Upper lobe of right lung (tissue), 1 donor: ENCODE measurements at regions of chr11 and their contacts with region 1.

Region 1: GRCh38 chr11:124746621-124747243 is 5.3 kb downstream of the VSIG2 start:
- DNase-seq: peak; percentile 94
- ATAC-seq: peak; percentile 90
- H3K4me3 ChIP-seq: peak overlapping the region; percentile 54
- H3K27ac ChIP-seq: peak overlapping the region; percentile 85
- H3K4me1 ChIP-seq: peaks cover 38% of the 10 kb centered on the region
- H3K27me3 ChIP-seq: no peaks in the 10 kb centered on the region
- CTCF ChIP-seq: peak; percentile 51

Region 2: DNA sequence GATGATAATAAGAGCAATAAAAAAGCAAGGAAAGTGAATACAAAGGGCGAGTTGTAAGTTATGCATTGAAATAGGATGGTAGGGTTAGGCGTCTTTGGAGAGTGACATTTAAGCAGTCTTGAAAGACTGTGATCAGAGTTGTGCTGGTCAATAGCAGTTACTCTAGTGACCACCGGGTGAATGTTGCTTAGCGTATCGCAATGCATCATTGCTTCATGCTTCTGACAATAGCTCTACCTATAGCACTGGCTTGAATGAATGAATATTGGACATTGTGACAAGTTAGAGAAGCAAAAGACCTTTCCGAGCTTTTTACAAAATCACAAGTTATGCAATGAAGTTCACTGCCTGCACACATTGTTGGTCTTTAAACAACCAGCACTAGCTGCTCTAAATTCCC is 195.5 kb before region 1 on chr11:
- intact Hi-C with region 1: no loop called
- DNase-seq: no peak
- ATAC-seq: no peak
- H3K4me3 ChIP-seq: no peak overlapping the region
- H3K27ac ChIP-seq: no peak overlapping the region
- H3K4me1 ChIP-seq: no peaks in the 10 kb centered on the region
- H3K27me3 ChIP-seq: no peaks in the 10 kb centered on the region
- CTCF ChIP-seq: no peak

Region 3: GRCh38 chr11:124673333-124674167 is 73.2 kb before region 1 on chr11 and contains the starts of genes SIAE and SPA17:
- intact Hi-C with region 1: loop called (anchors 5 kb)
- DNase-seq: peak; percentile 98
- ATAC-seq: peak; percentile 98
- H3K4me3 ChIP-seq: peak within 1 kb of the TSS; percentile 78
- H3K27ac ChIP-seq: peak within 1 kb of the TSS; percentile 94
- H3K4me1 ChIP-seq: peaks cover 20% of the 10 kb centered on the region
- H3K27me3 ChIP-seq: no peaks in the 10 kb centered on the region
- CTCF ChIP-seq: no peak
- total RNA-seq, gene SIAE: 41.6 TPM
- total RNA-seq, gene SPA17: 4.8 TPM

Region 4: GRCh38 chr11:124812876-124813275 is 66.1 kb after region 1 on chr11:
- intact Hi-C with region 1: no loop called
- DNase-seq: no peak
- ATAC-seq: no peak
- H3K4me3 ChIP-seq: no peak overlapping the region
- H3K27ac ChIP-seq: no peak overlapping the region
- H3K4me1 ChIP-seq: no peaks in the 10 kb centered on the region
- H3K27me3 ChIP-seq: no peaks in the 10 kb centered on the region
- CTCF ChIP-seq: no peak